B cell (primary cell): ENCODE measurements at regions of chr17 and their contacts with region 1.

Region 1: DNA sequence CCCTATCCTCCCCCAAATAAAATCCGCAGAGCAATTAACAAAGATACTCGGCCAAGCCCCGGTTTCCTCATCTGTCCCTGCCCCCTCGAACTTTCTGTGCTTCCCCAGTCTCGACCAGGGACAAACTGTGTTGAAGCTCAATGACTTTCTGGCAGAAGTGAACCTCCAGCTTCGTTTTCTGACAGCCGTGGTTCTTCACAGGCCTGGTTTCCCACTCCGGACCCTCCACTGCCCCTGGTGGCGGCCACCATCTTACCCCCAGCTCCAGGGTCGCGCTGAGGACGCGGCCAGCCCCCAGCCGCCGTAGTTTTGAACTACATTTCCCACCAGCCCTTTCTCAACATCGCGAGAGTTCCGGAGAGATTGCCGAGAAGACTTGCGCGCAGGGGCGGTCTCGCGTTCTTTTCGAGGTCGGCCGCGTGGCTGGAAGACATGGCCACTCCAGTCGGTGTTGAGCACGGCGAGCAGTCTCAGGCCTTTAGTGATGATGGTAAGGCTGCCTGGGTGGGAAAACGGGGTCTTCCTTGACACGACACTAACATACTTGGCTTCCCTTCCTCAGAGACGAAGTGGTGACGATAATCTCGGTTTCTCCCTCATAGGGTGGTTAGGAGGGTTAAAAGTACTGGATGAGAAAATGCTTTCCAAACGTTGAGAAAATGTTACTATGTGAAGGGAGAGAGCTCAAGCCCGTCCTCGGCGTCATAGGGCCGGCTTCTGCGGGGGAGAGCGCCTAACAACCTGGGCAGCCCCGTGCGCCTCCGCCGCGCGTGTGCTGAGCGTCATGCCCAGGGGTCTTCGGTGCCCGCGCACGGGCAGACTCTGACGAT is 17.7 kb downstream of the PRCD start:
- DNase-seq: peak; percentile 97
- ATAC-seq: peak; percentile 93
- H3K4me3 ChIP-seq: peak overlapping the region; percentile 76 to 94 (median 88)
- H3K4me3 Mint-ChIP-seq: peak overlapping the region; percentile 100
- H3K27ac ChIP-seq: peak overlapping the region; percentile 81 to 98
- H3K27ac Mint-ChIP-seq: peak overlapping the region; percentile 97
- H3K4me1 ChIP-seq: peaks cover 16 to 37% of the 10 kb centered on the region in 2 donors
- H3K4me1 Mint-ChIP-seq: peaks cover 63% of the 10 kb centered on the region
- H3K27me3 ChIP-seq: no peaks in the 10 kb centered on the region
- H3K27me3 Mint-ChIP-seq: no peaks in the 10 kb centered on the region
- CTCF ChIP-seq: peak; percentile 58

Region 2: GRCh38 chr17:76567634-76568432 is 10.2 kb after region 1 on chr17:
- CTCF ChIA-PET with region 1: interaction called, 19 read pairs
- POLR2A ChIA-PET with region 1: interaction called, 3 read pairs
- intact Hi-C with region 1: no loop called
- DNase-seq: peak; percentile 71
- ATAC-seq: peak; percentile 82
- H3K4me3 ChIP-seq: no peak overlapping the region
- H3K4me3 Mint-ChIP-seq: peak overlapping the region; percentile 41
- H3K27ac ChIP-seq: peak overlapping the region; percentile 31 to 56
- H3K27ac Mint-ChIP-seq: peak overlapping the region; percentile 88
- H3K4me1 ChIP-seq: peaks cover 19 to 21% of the 10 kb centered on the region in 2 donors
- H3K4me1 Mint-ChIP-seq: peaks cover 29% of the 10 kb centered on the region
- H3K27me3 ChIP-seq: no peaks in the 10 kb centered on the region
- H3K27me3 Mint-ChIP-seq: no peaks in the 10 kb centered on the region
- CTCF ChIP-seq: no peak

Region 3: DNA sequence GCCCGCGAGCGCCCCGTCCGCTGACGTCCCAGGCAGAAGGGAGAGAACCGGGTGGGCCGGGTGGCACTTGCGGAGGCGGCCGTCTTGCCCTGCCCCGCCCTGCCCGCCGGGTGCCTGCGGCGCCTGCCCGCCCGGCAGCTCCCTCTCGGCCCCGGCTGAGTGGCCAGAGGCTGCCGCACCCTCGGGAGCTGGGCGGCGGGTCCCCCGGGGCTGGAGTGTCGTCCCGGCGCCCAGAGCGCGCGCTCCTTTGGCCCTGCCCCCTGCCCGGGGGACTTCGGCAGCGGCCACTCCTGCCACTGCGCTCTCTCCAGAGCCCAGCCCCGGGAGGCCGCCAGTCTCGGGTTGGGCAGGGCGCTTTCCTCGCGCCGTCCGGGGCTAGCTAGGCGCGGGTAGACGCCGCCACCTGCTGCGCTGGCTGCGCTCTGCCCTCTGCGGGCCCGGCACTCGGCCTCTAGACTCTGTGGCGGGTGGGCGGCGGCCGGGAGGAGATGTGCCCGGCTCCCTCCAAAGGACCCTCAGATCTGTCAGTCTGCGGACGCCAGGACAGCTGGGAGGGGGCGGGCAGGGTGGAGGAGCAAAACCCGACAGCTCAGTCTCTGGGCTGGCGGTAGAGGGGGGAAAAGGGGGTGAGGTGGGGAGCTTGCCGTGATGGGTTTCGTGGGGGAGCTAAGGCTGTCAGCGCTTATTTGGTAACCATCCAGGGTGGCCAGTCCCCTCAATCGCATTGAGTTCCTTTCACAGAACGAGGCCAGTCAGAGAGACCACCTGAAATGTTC is 28.4 kb after region 1 on chr17 and contains the start of gene ST6GALNAC2:
- CTCF ChIA-PET with region 1: interaction called, 6 read pairs
- POLR2A ChIA-PET with region 1: interaction called, 3 read pairs
- intact Hi-C with region 1: loop called (anchors 2 kb)
- DNase-seq: peak; percentile 66
- ATAC-seq: peak; percentile 76
- H3K4me3 ChIP-seq: peak within 1 kb of the TSS; percentile 45 to 77 (median 57)
- H3K4me3 Mint-ChIP-seq: peak within 1 kb of the TSS; percentile 88
- H3K27ac ChIP-seq: no peak within 1 kb of the TSS
- H3K27ac Mint-ChIP-seq: no peak within 1 kb of the TSS
- H3K4me1 ChIP-seq: peaks cover 21% of the 10 kb centered on the region in 2 donors
- H3K4me1 Mint-ChIP-seq: peaks cover 12% of the 10 kb centered on the region
- H3K27me3 ChIP-seq: peaks cover 0 to 38% (median 20%) of the 10 kb centered on the region in 4 experiments
- H3K27me3 Mint-ChIP-seq: peaks cover 43% of the 10 kb centered on the region
- CTCF ChIP-seq: peak; percentile 27
- total RNA-seq, gene ST6GALNAC2: 2.7 TPM in 2 replicates

Region 4: DNA sequence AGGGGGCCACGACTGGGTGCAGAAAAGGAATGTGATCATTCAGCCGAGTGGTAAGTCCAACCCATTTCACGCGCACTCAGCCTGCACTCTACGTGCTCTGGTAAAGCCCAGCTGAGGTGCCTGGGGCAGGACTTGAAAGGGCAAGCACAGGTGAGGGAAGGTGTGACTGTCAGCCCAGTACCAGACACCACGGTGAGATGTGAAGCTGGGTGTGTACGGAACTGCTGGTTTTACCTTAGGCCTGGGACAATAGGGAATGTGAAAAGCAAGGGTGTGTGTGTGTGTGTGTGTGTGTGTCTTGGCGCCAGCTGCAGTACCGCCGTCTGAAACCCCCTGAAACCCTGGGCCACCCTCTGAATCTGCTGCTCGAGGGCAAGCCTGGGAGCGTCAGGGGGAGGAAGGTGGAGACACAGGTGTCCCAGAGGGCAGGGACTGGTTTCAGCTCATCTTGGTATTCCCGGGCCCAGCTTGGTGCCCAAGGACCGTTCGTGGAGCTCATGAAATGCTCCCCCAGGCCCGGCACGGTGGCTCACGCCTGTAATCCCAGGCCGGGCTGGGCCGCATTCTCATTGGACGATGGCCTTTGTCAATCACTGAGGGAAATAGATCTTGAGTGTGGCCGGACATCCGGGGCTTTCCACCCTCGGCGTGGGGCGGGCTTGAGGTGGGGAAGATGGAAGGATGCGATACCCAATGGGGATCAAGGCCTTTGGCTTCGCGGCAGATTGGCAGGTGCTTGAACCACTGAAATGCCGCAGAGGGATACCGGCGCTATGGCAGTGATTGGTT is 113.7 kb after region 1 on chr17:
- CTCF ChIA-PET with region 1: no interaction called
- POLR2A ChIA-PET with region 1: no interaction called
- intact Hi-C with region 1: loop called (anchors 1 kb)
- DNase-seq: peak; percentile 99
- ATAC-seq: peak; percentile 99
- H3K4me3 ChIP-seq: peak overlapping the region; percentile 66 to 92 (median 84)
- H3K4me3 Mint-ChIP-seq: peak overlapping the region; percentile 92
- H3K27ac ChIP-seq: peak overlapping the region; percentile 80 to 81
- H3K27ac Mint-ChIP-seq: peak overlapping the region; percentile 93
- H3K4me1 ChIP-seq: peaks cover 10 to 18% of the 10 kb centered on the region in 2 donors
- H3K4me1 Mint-ChIP-seq: peaks cover 25% of the 10 kb centered on the region
- H3K27me3 ChIP-seq: peaks cover 0 to 3% (median 1%) of the 10 kb centered on the region in 4 experiments
- H3K27me3 Mint-ChIP-seq: peaks cover 13% of the 10 kb centered on the region
- CTCF ChIP-seq: no peak

Region 5: GRCh38 chr17:76714822-76715495 is 157.4 kb after region 1 on chr17:
- CTCF ChIA-PET with region 1: interaction called, 23 read pairs
- POLR2A ChIA-PET with region 1: no interaction called
- intact Hi-C with region 1: loop called (anchors 5 kb)
- DNase-seq: peak; percentile 75
- ATAC-seq: peak; percentile 7
- H3K4me3 ChIP-seq: peak overlapping the region in 3 of 5 experiments; percentile 11 to 20 (median 12)
- H3K4me3 Mint-ChIP-seq: peak overlapping the region; percentile 62
- H3K27ac ChIP-seq: peak overlapping the region; percentile 46 to 72
- H3K27ac Mint-ChIP-seq: peak overlapping the region; percentile 21
- H3K4me1 ChIP-seq: peaks cover 22 to 31% of the 10 kb centered on the region in 2 donors
- H3K4me1 Mint-ChIP-seq: peaks cover 25% of the 10 kb centered on the region
- H3K27me3 ChIP-seq: no peaks in the 10 kb centered on the region
- H3K27me3 Mint-ChIP-seq: no peaks in the 10 kb centered on the region
- CTCF ChIP-seq: peak; percentile 91